ENCODE measurements at regions of chr22 and their contacts with region 1.

Region 1: DNA sequence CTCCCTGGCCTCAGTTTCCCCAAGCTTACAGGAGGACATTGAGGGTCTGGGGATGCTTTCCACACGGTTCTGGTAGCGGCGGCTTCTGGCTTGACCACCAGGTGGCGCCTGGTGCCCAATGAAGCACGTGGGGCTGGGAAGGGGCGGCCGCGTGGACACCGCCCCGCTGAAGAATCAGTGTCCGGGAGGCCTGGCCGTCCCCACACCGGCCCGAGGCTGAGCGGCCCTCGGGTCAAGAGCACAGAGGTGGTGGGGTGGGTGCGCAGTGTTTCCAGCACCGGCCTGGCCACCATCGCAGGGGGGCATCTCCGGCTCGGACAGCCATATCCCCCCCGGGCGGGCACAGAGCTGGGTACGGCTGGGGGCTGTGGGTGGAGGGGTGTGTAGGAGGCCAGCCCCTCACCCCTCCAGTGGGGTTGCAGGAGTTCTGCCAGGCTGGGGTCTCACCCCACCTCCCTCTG is 27.8 kb upstream of the PPARA start:
- DNase-seq: peak; percentile 43
- H3K4me3 ChIP-seq: no peak overlapping the region
- H3K27ac ChIP-seq: no peak overlapping the region
- H3K4me1 ChIP-seq: no peaks in the 10 kb centered on the region
- H3K27me3 ChIP-seq: no peaks in the 10 kb centered on the region
- CTCF ChIP-seq: peak; percentile 93 to 95
- POLR2A ChIP-seq: no peak

Region 2: GRCh38 chr22:46108564-46109473 is 13.7 kb before region 1 on chr22:
- CTCF ChIA-PET with region 1: no interaction called
- POLR2A ChIA-PET with region 1: no interaction called
- dilution Hi-C with region 1: no loop called
- intact Hi-C with region 1: no loop called
- DNase-seq: peak; percentile 20
- H3K4me3 ChIP-seq: no peak overlapping the region
- H3K27ac ChIP-seq: no peak overlapping the region
- H3K4me1 ChIP-seq: no peaks in the 10 kb centered on the region
- H3K27me3 ChIP-seq: no peaks in the 10 kb centered on the region
- CTCF ChIP-seq: no peak
- POLR2A ChIP-seq: peak; percentile 33

Region 3: DNA sequence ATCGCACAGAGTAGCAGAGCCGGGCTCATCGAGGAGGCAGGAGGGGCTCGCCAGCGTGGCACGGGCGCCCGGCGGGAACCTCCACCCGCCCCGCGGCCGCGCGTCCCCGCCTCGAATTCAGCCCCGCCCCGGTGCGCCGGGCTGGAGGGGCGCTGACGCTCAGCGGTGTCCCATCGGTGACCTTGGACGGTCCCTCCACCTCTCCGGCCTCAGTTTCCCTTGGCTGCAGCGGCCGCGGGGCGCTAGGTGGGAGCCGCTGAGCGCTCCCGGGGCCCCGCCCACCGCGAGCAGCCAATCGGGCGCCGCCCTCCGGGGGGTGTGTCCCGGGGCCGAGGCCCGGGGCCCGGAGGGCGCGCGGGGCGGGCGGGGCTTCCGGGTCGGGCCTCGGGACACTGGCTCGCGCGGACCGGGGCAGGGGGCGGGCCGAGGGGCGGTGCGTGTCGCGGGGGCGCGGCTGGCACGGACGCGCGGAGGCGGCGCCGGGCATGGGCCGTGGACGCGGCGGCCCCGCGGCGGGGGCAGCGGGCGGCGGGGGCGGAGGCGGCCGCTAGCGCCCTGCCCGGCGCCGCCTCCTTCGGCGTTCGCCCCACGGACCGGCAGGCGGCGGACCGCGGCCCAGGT is 27.6 kb after region 1 on chr22 and contains the start of gene PPARA:
- CTCF ChIA-PET with region 1: interaction called, 11 read pairs
- POLR2A ChIA-PET with region 1: no interaction called
- dilution Hi-C with region 1: no loop called
- intact Hi-C with region 1: no loop called
- DNase-seq: peak; percentile 40
- H3K4me3 ChIP-seq: peak within 1 kb of the TSS; percentile 46 to 92 (median 73)
- H3K27ac ChIP-seq: no peak within 1 kb of the TSS
- H3K4me1 ChIP-seq: peaks cover 11% of the 10 kb centered on the region
- H3K27me3 ChIP-seq: peaks cover 8 to 25% of the 10 kb centered on the region in 2 experiments
- CTCF ChIP-seq: no peak
- POLR2A ChIP-seq: no peak
- total RNA-seq, gene PPARA: 6.6 and 10.7 TPM in 2 replicates

Region 4: DNA sequence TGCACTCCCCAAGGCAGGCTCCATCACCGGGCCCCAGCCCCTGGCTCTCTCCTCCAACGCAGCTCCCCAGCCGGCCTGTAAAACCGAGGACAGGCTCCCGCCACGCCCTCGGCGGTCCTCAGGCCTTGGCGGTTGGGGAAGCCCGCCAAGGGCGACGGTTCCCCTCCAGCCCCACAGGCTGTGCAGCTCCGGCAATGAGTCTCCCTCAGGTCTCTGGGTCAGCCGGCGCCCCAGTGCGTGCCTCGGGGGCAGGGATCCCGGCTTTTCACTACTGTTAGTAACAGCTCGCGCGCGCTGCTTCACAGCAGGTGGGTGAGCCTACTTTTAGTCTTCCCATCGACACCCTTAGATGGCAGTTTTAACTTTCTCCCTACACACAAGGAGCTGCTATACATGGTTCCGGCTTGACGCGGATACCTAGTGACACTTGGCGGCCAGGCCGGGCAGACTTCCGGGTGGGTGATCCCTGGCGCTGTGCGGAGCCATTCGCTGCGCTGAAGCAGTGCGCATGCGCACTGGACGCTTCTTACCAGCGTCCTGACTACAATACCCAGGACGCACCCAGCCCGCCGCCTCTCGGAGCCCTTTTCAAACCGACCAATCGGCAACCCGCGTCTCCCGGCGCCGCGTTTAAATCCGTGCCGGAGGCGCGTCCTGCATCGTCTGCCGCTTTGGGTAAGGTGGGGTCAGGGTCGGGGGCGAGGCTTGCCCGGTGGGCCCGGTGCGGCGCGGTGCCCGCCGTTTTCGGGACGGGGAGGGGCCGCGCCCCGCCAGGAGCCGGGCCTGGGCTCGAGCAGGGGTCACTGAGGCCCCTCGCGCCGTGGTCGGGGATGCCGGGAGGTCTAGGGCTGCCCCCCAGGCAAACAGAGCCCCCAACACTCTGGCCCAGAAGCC is 174.0 kb after region 1 on chr22 and contains the start of gene GTSE1:
- CTCF ChIA-PET with region 1: interaction called, 12 read pairs
- POLR2A ChIA-PET with region 1: no interaction called
- dilution Hi-C with region 1: no loop called
- intact Hi-C with region 1: loop called (anchors 1 kb)
- DNase-seq: peak; percentile 97
- H3K4me3 ChIP-seq: peak within 1 kb of the TSS; percentile 42 to 75 (median 73)
- H3K27ac ChIP-seq: peak within 1 kb of the TSS; percentile 65
- H3K4me1 ChIP-seq: peaks cover 14% of the 10 kb centered on the region
- H3K27me3 ChIP-seq: no peaks in the 10 kb centered on the region
- CTCF ChIP-seq: no peak
- POLR2A ChIP-seq: peak; percentile 71
- total RNA-seq, gene GTSE1: 57.0 and 57.2 TPM in 2 replicates

Region 5: DNA sequence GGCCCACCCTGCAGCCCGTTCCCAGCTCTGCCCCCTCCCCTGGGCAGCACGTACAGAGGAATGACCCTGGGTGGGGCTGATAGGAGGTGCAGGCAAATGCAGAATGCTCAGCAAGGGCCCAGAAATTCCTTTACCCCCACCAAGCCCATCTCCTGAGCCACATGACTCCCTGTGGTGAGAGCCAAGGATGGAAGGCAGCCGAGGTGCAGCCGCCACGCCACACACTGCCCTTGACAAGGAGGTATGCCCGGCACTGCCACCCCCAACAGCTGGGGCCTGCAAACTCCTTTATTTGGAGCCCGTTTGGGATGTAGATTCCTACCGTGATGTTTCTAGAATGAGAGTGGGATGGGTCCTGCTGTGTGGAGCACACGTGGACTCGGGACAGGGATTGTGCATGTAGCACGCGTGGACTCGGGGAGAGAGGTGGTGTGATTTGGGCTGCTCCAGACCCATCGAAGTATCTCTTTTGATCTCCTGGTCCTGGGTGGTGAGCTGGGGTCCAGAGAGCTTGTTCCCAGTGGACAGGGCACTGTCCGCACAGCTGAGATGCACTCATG is 187.1 kb after region 1 on chr22:
- CTCF ChIA-PET with region 1: interaction called, 111 read pairs
- POLR2A ChIA-PET with region 1: no interaction called
- dilution Hi-C with region 1: no loop called
- intact Hi-C with region 1: loop called (anchors 1 kb)
- DNase-seq: no peak
- H3K4me3 ChIP-seq: no peak overlapping the region
- H3K27ac ChIP-seq: no peak overlapping the region
- H3K4me1 ChIP-seq: no peaks in the 10 kb centered on the region
- H3K27me3 ChIP-seq: no peaks in the 10 kb centered on the region
- CTCF ChIP-seq: no peak
- POLR2A ChIP-seq: no peak

Region 6: GRCh38 chr22:46320166-46320710 is 197.7 kb after region 1 on chr22:
- CTCF ChIA-PET with region 1: interaction called, 111 read pairs
- POLR2A ChIA-PET with region 1: no interaction called
- dilution Hi-C with region 1: no loop called
- intact Hi-C with region 1: no loop called
- DNase-seq: no peak
- H3K4me3 ChIP-seq: no peak overlapping the region
- H3K27ac ChIP-seq: no peak overlapping the region
- H3K4me1 ChIP-seq: no peaks in the 10 kb centered on the region
- H3K27me3 ChIP-seq: no peaks in the 10 kb centered on the region
- CTCF ChIP-seq: no peak
- POLR2A ChIP-seq: no peak

Region 7: GRCh38 chr22:46542011-46542985 is 419.8 kb after region 1 on chr22:
- CTCF ChIA-PET with region 1: interaction called, 21 read pairs
- POLR2A ChIA-PET with region 1: no interaction called
- dilution Hi-C with region 1: no loop called
- intact Hi-C with region 1: no loop called
- DNase-seq: peak; percentile 66
- H3K4me3 ChIP-seq: no peak overlapping the region
- H3K27ac ChIP-seq: no peak overlapping the region
- H3K4me1 ChIP-seq: peaks cover 22% of the 10 kb centered on the region
- H3K27me3 ChIP-seq: peaks cover 12 to 21% of the 10 kb centered on the region in 2 experiments
- CTCF ChIP-seq: peak; percentile 90 to 99
- POLR2A ChIP-seq: no peak

Measured in endothelial cell of umbilical vein (primary cell).